ENCODE measurements at regions of chr19 and their contacts with region 1.

Region 1: DNA sequence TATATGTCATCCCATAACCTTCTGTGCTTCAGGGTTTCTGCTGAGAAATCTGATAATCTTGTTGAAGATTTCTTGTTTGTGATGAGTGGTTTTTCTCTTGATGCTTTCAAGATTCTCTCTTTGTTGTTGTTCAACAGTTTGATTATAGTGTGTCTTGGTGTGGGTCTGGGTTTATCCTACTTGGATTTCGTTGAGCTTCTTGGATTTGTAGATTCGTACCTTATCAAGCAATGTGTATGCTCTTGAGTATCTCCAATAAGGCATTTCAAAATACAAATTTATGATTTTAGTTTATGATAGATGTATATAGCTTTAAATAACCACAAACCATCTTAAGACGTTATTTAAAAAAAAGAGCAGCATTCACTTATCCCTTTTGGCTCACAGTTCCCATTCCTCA is 57.5 kb downstream of the URI1 start:
- DNase-seq: no peak
- H3K4me3 ChIP-seq: no peak overlapping the region
- H3K4me3 Mint-ChIP-seq: peak overlapping the region in 1 of 8 donors; percentile 3
- H3K27ac ChIP-seq: no peak overlapping the region
- H3K27ac Mint-ChIP-seq: no peak overlapping the region
- H3K4me1 ChIP-seq: peaks cover 22% of the 10 kb centered on the region
- H3K4me1 Mint-ChIP-seq: peaks cover 41 to 69% (median 57%) of the 10 kb centered on the region in 4 donors
- H3K27me3 ChIP-seq: no peaks in the 10 kb centered on the region
- H3K27me3 Mint-ChIP-seq: no peaks in the 10 kb centered on the region

Region 2: GRCh38 chr19:29953352-29954247 is 45.9 kb before region 1 on chr19:
- CTCF ChIA-PET with region 1: no interaction called
- POLR2A ChIA-PET with region 1: no interaction called
- intact Hi-C with region 1: loop called (anchors 5 kb)
- DNase-seq: no peak
- H3K4me3 ChIP-seq: no peak overlapping the region
- H3K4me3 Mint-ChIP-seq: peak overlapping the region in 2 of 8 donors; percentile 20 to 34
- H3K27ac ChIP-seq: no peak overlapping the region
- H3K27ac Mint-ChIP-seq: peak overlapping the region in 2 of 7 donors; percentile 46 to 62
- H3K4me1 ChIP-seq: peaks cover 29% of the 10 kb centered on the region
- H3K4me1 Mint-ChIP-seq: peaks cover 37 to 65% (median 49%) of the 10 kb centered on the region in 4 donors
- H3K27me3 ChIP-seq: no peaks in the 10 kb centered on the region
- H3K27me3 Mint-ChIP-seq: no peaks in the 10 kb centered on the region

Region 3: DNA sequence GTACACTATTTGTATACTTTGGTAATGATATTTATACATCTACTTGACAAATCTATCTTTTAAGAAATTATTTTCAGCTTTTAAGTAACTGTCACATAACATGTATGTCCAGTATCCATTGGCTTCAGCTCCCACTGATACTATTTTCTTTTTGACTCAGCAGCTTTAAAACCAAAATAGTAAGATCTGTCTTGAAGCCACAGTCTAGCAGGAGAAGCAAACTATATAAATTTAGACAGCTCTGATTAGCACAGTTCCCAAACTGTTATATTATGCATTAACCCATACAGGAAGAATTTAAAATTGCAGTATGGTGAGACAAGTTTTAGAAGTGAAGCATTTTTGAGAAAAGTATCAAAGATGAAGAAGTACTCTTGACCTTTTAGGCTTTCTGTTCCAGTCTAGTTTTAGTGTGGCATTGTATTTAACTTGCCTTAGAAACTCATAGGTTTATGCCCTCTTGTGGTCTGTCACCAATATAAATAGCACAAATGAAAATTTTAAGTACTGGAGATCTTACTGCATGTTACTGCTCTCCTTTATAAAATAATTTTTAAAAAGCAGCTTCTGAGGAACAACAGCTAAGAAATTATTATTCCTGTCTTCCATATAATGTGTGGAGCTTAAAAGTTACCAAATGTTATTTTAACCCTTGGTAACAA is 32.8 kb before region 1 on chr19:
- CTCF ChIA-PET with region 1: no interaction called
- POLR2A ChIA-PET with region 1: no interaction called
- intact Hi-C with region 1: no loop called
- DNase-seq: peak in 1 of 5 donors; percentile 10
- H3K4me3 ChIP-seq: no peak overlapping the region
- H3K4me3 Mint-ChIP-seq: peak overlapping the region in 5 of 8 donors; percentile 12 to 60 (median 29)
- H3K27ac ChIP-seq: no peak overlapping the region
- H3K27ac Mint-ChIP-seq: peak overlapping the region in 5 of 7 donors; percentile 9 to 51 (median 25)
- H3K4me1 ChIP-seq: peaks cover 92% of the 10 kb centered on the region
- H3K4me1 Mint-ChIP-seq: peaks cover 69 to 84% (median 77%) of the 10 kb centered on the region in 4 donors
- H3K27me3 ChIP-seq: no peaks in the 10 kb centered on the region
- H3K27me3 Mint-ChIP-seq: no peaks in the 10 kb centered on the region

Measured in CD4-positive, alpha-beta memory T cell (primary cell).